SK-N-SH (cell line): ENCODE measurements at regions of chr12 and their contacts with region 1.

Region 1: DNA sequence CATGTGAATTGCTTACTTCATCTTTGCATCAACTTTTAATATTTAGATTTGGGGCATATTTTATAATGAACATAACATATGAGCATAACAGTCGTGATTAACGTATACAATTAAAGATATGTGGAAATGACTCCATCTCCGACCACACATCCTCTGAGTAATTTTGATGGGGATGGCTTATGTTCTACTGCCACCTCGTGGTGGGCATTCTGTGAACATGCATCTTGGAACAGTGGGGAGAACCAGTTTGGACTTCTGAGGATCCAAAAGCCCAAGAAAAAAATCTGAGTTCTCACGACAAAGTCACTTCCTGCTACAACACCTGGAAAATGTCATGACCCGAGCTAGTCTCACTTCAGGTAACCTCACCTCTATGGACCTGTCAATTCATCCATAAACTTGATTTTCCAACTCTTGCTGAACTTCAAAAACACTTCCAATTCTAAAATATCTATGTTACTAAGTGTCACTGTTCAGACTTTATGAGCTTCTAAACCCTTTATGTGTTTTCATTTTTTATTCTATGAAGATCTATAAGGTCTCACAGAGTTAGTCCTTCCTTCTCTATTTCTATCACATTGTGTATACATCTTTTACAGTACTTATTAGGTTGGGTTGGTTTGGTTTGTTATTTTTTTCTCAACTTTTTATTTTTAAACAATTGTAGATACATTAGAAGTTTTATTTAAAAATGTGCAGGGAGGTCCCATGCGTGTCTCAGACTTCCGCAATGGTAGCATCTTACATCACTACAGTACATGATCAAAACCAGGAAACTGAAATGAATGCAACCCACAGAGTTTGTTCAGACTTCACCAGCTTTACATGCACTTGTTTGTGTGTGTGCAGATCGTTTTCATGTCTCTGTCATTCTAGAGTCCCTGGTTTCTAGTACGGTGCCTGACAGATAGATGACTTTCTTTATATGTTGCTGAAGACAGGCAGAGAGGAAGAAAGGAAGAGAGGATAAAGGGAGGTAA is 38.2 kb upstream of the STAB2 start:
- DNase-seq: peak; percentile 55
- H3K4me3 ChIP-seq: peak overlapping the region in 1 of 2 experiments; percentile 36; a peak in 1 of 4 replicates
- H3K27ac ChIP-seq: no peak overlapping the region
- H3K4me1 ChIP-seq: no peaks in the 10 kb centered on the region; a peak in 1 of 4 replicates
- H3K27me3 ChIP-seq: no peaks in the 10 kb centered on the region
- CTCF ChIP-seq: peak; percentile 97
- EP300 ChIP-seq: no peak
- RAD21 ChIP-seq: peak; percentile 97

Region 2: GRCh38 chr12:102948941-102949352 is 600.0 kb before region 1 on chr12:
- CTCF ChIA-PET with region 1: interaction called, 138 read pairs
- POLR2A ChIA-PET with region 1: no interaction called
- DNase-seq: peak; percentile 61
- H3K4me3 ChIP-seq: peak overlapping the region in 1 of 2 experiments; percentile 37; a peak in 1 of 4 replicates
- H3K27ac ChIP-seq: no peak overlapping the region
- H3K4me1 ChIP-seq: peaks cover 0 to 7% of the 10 kb centered on the region in 2 experiments; a peak in 1 of 4 replicates
- H3K27me3 ChIP-seq: no peaks in the 10 kb centered on the region
- CTCF ChIP-seq: peak; percentile 86
- EP300 ChIP-seq: no peak
- RAD21 ChIP-seq: peak; percentile 89

Region 3: GRCh38 chr12:103495479-103496456 is 53.1 kb before region 1 on chr12 and contains the start of gene C12orf42:
- CTCF ChIA-PET with region 1: interaction called, 32 read pairs
- POLR2A ChIA-PET with region 1: no interaction called
- DNase-seq: peak; percentile 76
- H3K4me3 ChIP-seq: peak within 1 kb of the TSS; percentile 46 to 56
- H3K27ac ChIP-seq: peak within 1 kb of the TSS in 1 of 2 experiments; percentile 58; a peak in 2 of 4 replicates
- H3K4me1 ChIP-seq: peaks cover 0 to 7% of the 10 kb centered on the region in 2 experiments; a peak in 1 of 4 replicates
- H3K27me3 ChIP-seq: no peaks in the 10 kb centered on the region
- CTCF ChIP-seq: peak; percentile 66
- EP300 ChIP-seq: no peak
- RAD21 ChIP-seq: peak; percentile 74
- polyA plus RNA-seq, gene C12orf42: not detected in 2 replicates

Region 4: GRCh38 chr12:103523771-103524170 is 25.1 kb before region 1 on chr12:
- CTCF ChIA-PET with region 1: interaction called, 21 read pairs
- POLR2A ChIA-PET with region 1: no interaction called
- DNase-seq: no peak
- H3K4me3 ChIP-seq: no peak overlapping the region
- H3K27ac ChIP-seq: peak overlapping the region in 1 of 2 experiments; percentile 64; a peak in 2 of 4 replicates
- H3K4me1 ChIP-seq: peaks cover 0 to 12% of the 10 kb centered on the region in 2 experiments; a peak in 1 of 4 replicates
- H3K27me3 ChIP-seq: no peaks in the 10 kb centered on the region
- CTCF ChIP-seq: no peak
- EP300 ChIP-seq: no peak
- RAD21 ChIP-seq: no peak

Region 5: DNA sequence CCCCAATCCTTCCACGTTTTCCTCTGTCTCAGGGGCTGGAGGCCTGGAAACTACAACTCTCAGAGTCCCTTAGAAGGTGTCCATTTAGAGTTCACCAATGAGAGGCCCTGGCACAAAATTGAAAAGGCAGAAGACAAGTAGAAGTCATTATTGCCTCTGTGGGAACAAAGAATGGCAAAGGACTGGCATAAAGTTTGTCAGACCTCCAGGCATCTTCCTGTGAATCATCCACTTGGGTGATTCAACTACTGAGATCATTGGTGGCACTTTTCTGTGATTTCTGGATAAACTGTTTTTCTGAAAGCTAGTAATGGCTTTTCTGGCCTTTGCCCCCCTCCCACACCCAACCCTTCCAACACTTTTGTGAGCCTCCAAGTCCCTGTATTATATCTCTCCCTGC is 10.5 kb before region 1 on chr12:
- CTCF ChIA-PET with region 1: interaction called, 31 read pairs
- POLR2A ChIA-PET with region 1: no interaction called
- DNase-seq: no peak
- H3K4me3 ChIP-seq: no peak overlapping the region
- H3K27ac ChIP-seq: no peak overlapping the region
- H3K4me1 ChIP-seq: no peaks in the 10 kb centered on the region
- H3K27me3 ChIP-seq: no peaks in the 10 kb centered on the region
- CTCF ChIP-seq: no peak
- EP300 ChIP-seq: no peak
- RAD21 ChIP-seq: no peak